Natural killer cell (primary cell): ENCODE measurements at regions of chr14 and their contacts with region 1.

Region 1: GRCh38 chr14:23109769-23110168 is 5.0 kb upstream of the CIROP start:
- DNase-seq: no peak
- ATAC-seq: no peak
- H3K4me3 ChIP-seq: no peak overlapping the region
- H3K4me3 Mint-ChIP-seq: no peak overlapping the region
- H3K27ac ChIP-seq: no peak overlapping the region
- H3K27ac Mint-ChIP-seq: no peak overlapping the region
- H3K4me1 ChIP-seq: no peaks in the 10 kb centered on the region
- H3K4me1 Mint-ChIP-seq: no peaks in the 10 kb centered on the region
- H3K27me3 ChIP-seq: no peaks in the 10 kb centered on the region
- H3K27me3 Mint-ChIP-seq: peaks cover 0 to 7% of the 10 kb centered on the region in 2 donors
- CTCF ChIP-seq: no peak

Region 2: DNA sequence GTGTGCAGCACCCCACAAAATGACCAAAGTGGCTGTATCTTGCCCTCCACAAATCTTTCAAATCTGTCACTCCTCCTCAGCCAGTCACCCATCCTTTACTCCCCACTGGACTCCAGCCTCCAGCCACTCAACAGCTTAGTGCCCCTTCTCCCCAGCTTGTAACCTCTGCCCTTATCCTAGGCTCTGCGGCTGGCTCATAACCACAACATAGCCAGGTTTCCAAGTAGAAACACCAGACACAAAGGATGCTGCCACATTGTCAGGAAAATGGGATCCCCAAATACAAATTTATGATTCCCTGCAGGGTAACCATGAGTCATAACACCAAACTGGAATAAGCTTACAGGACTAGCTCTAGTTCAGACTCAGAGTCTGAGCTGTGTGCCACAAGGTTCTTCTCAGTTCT is 328.2 kb before region 1 on chr14:
- intact Hi-C with region 1: no loop called
- DNase-seq: no peak
- ATAC-seq: no peak
- H3K4me3 ChIP-seq: no peak overlapping the region
- H3K4me3 Mint-ChIP-seq: no peak overlapping the region
- H3K27ac ChIP-seq: no peak overlapping the region
- H3K27ac Mint-ChIP-seq: no peak overlapping the region
- H3K4me1 ChIP-seq: no peaks in the 10 kb centered on the region
- H3K4me1 Mint-ChIP-seq: no peaks in the 10 kb centered on the region
- H3K27me3 ChIP-seq: no peaks in the 10 kb centered on the region
- H3K27me3 Mint-ChIP-seq: no peaks in the 10 kb centered on the region
- CTCF ChIP-seq: no peak

Region 3: GRCh38 chr14:23068476-23069412 is 41.0 kb before region 1 on chr14:
- intact Hi-C with region 1: loop called (anchors 1 kb)
- DNase-seq: peak; percentile 55 to 91
- ATAC-seq: peak; percentile 82 to 92 (median 84)
- H3K4me3 ChIP-seq: no peak overlapping the region
- H3K4me3 Mint-ChIP-seq: peak overlapping the region; percentile 37
- H3K27ac ChIP-seq: no peak overlapping the region
- H3K27ac Mint-ChIP-seq: peak overlapping the region; percentile 72 to 78
- H3K4me1 ChIP-seq: peaks cover 29% of the 10 kb centered on the region
- H3K4me1 Mint-ChIP-seq: peaks cover 27 to 41% of the 10 kb centered on the region in 2 donors
- H3K27me3 ChIP-seq: no peaks in the 10 kb centered on the region
- H3K27me3 Mint-ChIP-seq: no peaks in the 10 kb centered on the region
- CTCF ChIP-seq: peak; percentile 99

Region 4: DNA sequence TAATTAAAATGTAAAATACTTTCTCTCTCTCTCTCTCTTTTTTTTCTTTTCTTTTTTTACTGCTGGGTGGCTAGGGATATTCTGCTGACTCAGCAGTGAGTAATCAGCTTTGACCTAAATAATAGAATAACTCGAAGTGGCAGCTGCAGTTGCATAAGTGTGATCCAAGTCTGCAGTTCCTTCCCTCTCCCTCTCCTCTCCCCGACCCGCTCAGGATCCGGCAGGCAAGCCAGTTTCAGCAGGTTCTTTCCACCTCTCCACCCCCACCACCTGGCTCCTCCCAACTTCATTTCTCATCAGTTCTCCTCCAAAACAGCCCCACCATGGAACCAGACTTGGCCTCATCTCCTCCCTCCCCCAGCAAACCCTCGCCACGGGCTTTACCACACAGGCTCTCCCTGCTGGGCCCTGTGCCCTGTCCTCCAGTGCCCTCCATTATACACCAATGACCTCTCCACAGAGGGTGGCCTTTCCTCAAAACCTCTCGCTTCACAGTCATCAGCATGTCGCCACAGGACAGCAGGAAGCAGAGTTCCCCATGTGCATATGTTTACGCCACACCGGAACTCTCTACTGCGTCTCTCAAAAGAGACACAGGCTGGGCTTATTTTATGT is 51.3 kb after region 1 on chr14:
- intact Hi-C with region 1: no loop called
- DNase-seq: no peak
- ATAC-seq: peak; percentile 55 to 72 (median 60)
- H3K4me3 ChIP-seq: no peak overlapping the region
- H3K4me3 Mint-ChIP-seq: no peak overlapping the region
- H3K27ac ChIP-seq: no peak overlapping the region
- H3K27ac Mint-ChIP-seq: peak overlapping the region in 1 of 2 donors; percentile 61
- H3K4me1 ChIP-seq: peaks cover 6% of the 10 kb centered on the region
- H3K4me1 Mint-ChIP-seq: peaks cover 8 to 19% of the 10 kb centered on the region in 2 donors
- H3K27me3 ChIP-seq: no peaks in the 10 kb centered on the region
- H3K27me3 Mint-ChIP-seq: peaks cover 3 to 13% of the 10 kb centered on the region in 2 donors
- CTCF ChIP-seq: no peak